Ovary (tissue), 10 donors: ENCODE measurements at regions of chr10 and their contacts with region 1.

Region 1: GRCh38 chr10:126511917-126512479 is 123.7 kb upstream of the ADAM12 start:
- DNase-seq: no peak
- H3K4me3 ChIP-seq: no peak overlapping the region
- H3K27ac ChIP-seq: no peak overlapping the region
- H3K4me1 ChIP-seq: no peaks in the 10 kb centered on the region
- H3K27me3 ChIP-seq: no peaks in the 10 kb centered on the region
- CTCF ChIP-seq: no peak
- EP300 ChIP-seq: no peak
- POLR2A ChIP-seq: no peak

Region 2: DNA sequence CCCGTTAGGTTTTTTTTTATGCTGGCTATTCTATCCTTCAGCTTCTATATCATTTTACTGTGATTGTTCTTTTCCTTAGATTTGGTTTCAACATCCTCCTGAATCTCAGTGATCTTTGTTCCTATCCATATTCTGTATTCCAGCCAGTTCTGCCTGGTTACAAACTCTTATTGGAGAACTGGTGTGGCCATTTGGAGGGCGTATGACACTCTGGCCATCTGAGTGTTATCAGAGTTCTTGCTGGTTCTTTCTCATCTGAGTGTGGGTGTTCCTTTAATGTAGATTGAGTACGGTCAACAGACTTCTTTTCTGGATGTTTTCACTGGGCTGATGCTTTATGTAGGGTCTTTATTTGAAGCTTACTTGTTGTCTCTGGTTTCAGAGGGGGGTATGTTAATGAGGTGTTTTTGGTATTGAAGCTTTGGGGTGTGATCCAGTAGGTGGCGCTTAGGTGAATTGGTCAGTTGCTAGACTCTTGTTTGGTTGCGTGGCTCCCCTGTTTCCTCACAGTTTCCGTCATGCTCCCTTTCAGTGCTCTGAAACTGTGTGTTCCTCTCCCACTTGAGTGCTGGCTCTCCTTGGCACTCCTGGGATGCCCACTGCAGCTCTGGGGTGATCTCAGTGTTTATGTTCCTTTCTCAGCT is 534.9 kb before region 1 on chr10:
- intact Hi-C with region 1: loop called in 2 of 4 experiments (anchors 10 kb)
- DNase-seq: no peak
- H3K4me3 ChIP-seq: no peak overlapping the region
- H3K27ac ChIP-seq: no peak overlapping the region
- H3K4me1 ChIP-seq: peaks cover under 1% of the 10 kb centered on the region
- H3K27me3 ChIP-seq: no peaks in the 10 kb centered on the region
- CTCF ChIP-seq: no peak
- EP300 ChIP-seq: no peak
- POLR2A ChIP-seq: no peak